CD4-positive, alpha-beta memory T cell (primary cell): ENCODE measurements at regions of chr1 and their contacts with region 1.

Region 1: DNA sequence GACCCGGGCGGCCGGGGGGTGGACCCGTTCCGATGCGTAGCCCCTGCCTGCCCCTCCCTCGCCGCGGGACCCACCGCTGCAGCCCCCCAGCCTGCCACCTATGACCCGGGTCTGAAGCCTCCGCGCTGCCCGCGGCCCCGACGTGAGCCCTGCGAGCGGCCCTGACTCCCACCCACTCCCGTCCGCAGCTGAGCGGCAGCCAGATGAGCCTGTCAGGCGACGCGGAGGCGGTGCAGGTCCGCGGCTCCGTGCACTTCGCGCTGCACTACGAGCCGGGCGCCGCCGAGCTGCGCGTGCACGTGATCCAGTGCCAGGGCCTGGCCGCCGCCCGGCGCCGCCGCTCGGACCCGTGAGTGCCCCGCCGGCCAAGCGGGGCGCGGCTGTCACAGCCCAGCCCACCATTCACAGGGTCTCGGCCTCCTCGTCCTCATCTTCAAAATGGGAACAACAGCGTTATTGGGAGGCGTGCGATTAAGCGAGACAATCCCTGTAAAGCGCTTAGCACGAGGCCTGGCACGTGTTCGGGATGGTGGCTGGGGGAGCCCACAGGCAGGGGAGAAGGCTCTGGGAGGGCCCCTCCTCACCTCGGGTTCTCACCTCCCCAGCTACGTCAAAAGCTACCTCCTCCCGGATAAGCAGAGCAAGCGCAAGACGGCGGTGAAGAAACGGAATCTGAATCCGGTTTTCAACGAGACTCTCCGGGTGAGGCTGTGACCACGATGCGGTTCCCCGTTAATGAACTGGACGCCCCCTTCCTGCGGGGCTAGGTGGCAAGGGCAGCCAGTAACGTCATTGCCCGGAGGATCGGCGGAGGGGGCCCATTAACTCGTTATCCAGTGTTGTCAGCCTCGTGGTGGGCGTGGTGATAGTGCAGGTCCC is 8.2 kb downstream of the SYTL1 start:
- DNase-seq: no peak
- H3K4me3 ChIP-seq: no peak overlapping the region
- H3K4me3 Mint-ChIP-seq: no peak overlapping the region
- H3K27ac ChIP-seq: no peak overlapping the region
- H3K27ac Mint-ChIP-seq: no peak overlapping the region
- H3K4me1 ChIP-seq: peaks cover 26% of the 10 kb centered on the region
- H3K4me1 Mint-ChIP-seq: peaks cover 7 to 24% (median 9%) of the 10 kb centered on the region in 4 donors
- H3K27me3 ChIP-seq: no peaks in the 10 kb centered on the region
- H3K27me3 Mint-ChIP-seq: no peaks in the 10 kb centered on the region

Region 2: GRCh38 chr1:27332536-27333281 is 17.3 kb before region 1 on chr1:
- CTCF ChIA-PET with region 1: interaction called, 63 read pairs
- POLR2A ChIA-PET with region 1: interaction called, 61 read pairs
- intact Hi-C with region 1: no loop called
- DNase-seq: peak; percentile 54 to 65 (median 58)
- H3K4me3 ChIP-seq: no peak overlapping the region
- H3K4me3 Mint-ChIP-seq: peak overlapping the region in 2 of 8 donors; percentile 7 to 25
- H3K27ac ChIP-seq: peak overlapping the region; percentile 10
- H3K27ac Mint-ChIP-seq: peak overlapping the region in 6 of 7 donors; percentile 5 to 75 (median 61)
- H3K4me1 ChIP-seq: peaks cover 33% of the 10 kb centered on the region
- H3K4me1 Mint-ChIP-seq: peaks cover 22 to 48% (median 34%) of the 10 kb centered on the region in 4 donors
- H3K27me3 ChIP-seq: no peaks in the 10 kb centered on the region
- H3K27me3 Mint-ChIP-seq: no peaks in the 10 kb centered on the region